Heart left ventricle (tissue), 16 donors: ENCODE measurements at regions of chr5 and their contacts with region 1.

Region 1: GRCh38 chr5:138542956-138543729 is at the start of gene ETF1:
- DNase-seq: peak; percentile 100
- ATAC-seq: peak; percentile 93 to 96 (median 96)
- H3K4me3 ChIP-seq: peak within 1 kb of the TSS; percentile 76 to 95 (median 84)
- H3K27ac ChIP-seq: peak within 1 kb of the TSS; percentile 90 to 100 (median 98)
- H3K4me1 ChIP-seq: peaks cover 17 to 80% (median 63%) of the 10 kb centered on the region in 12 donors
- H3K27me3 ChIP-seq: no peaks in the 10 kb centered on the region
- CTCF ChIP-seq: peak in 2 of 12 donors; percentile 17 to 18
- POLR2A ChIP-seq: peak; percentile 93 to 97
- total RNA-seq, gene ETF1: 52.4 to 116 (median 81.8) TPM

Region 2: GRCh38 chr5:138331449-138332368 is 211.4 kb before region 1 on chr5 and contains the start of gene CDC25C:
- intact Hi-C with region 1: loop called in 1 of 10 experiments (anchors 10 kb)
- DNase-seq: peak; percentile 97 to 99 (median 98)
- ATAC-seq: peak; percentile 100
- H3K4me3 ChIP-seq: peak within 1 kb of the TSS; percentile 2 to 63 (median 48)
- H3K27ac ChIP-seq: peak within 1 kb of the TSS in 1 of 12 donors; percentile 26
- H3K4me1 ChIP-seq: peaks cover 0 to 16% (median 10%) of the 10 kb centered on the region in 12 donors
- H3K27me3 ChIP-seq: no peaks in the 10 kb centered on the region
- CTCF ChIP-seq: peak in 1 of 12 donors; percentile 6
- POLR2A ChIP-seq: peak in 1 of 2 donors; percentile 17
- total RNA-seq, gene CDC25C: 0.19 to 2.5 (median 0.58) TPM in 4 of 9 donors, not detected in the others

Region 3: GRCh38 chr5:138449501-138450239 is 93.5 kb before region 1 on chr5:
- intact Hi-C with region 1: loop called in 1 of 10 experiments (anchors 5 kb)
- DNase-seq: peak; percentile 87 to 92 (median 89)
- ATAC-seq: peak; percentile 83 to 94 (median 92)
- H3K4me3 ChIP-seq: peak overlapping the region in 1 of 12 donors; percentile 16
- H3K27ac ChIP-seq: no peak overlapping the region
- H3K4me1 ChIP-seq: peaks cover 0 to 10% (median 7%) of the 10 kb centered on the region in 12 donors
- H3K27me3 ChIP-seq: no peaks in the 10 kb centered on the region
- CTCF ChIP-seq: peak; percentile 93 to 97 (median 96)
- POLR2A ChIP-seq: no peak

Region 4: DNA sequence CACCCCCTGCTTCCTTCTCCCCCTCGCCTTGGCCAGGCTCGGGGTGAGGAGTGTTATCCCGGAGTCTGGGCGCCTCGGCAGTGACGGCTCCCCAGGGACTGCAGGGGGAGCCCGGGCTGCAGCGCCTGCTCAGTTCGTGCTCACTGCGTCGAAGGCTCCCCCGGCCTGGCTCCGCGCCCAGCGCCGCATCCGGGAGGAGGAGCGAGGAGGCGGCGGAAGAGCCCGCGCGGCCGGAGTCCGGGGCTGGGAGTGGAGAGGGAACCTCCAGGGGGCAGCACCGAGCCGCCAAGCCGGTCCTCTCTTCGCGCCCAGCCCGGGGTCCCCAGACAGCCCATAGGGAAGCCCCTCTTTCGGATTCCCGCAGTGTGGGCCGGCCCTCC is 79.1 kb before region 1 on chr5:
- intact Hi-C with region 1: loop called in 5 of 10 experiments (anchors 2 to 5 kb)
- DNase-seq: peak; percentile 96 to 98 (median 97)
- ATAC-seq: peak; percentile 77 to 84 (median 80)
- H3K4me3 ChIP-seq: peak overlapping the region; percentile 62 to 95 (median 86)
- H3K27ac ChIP-seq: peak overlapping the region; percentile 93 to 100 (median 98)
- H3K4me1 ChIP-seq: peaks cover 0 to 68% (median 37%) of the 10 kb centered on the region in 12 donors
- H3K27me3 ChIP-seq: no peaks in the 10 kb centered on the region
- CTCF ChIP-seq: peak; percentile 85 to 99 (median 94)
- POLR2A ChIP-seq: peak in 1 of 2 donors; percentile 73

Region 5: DNA sequence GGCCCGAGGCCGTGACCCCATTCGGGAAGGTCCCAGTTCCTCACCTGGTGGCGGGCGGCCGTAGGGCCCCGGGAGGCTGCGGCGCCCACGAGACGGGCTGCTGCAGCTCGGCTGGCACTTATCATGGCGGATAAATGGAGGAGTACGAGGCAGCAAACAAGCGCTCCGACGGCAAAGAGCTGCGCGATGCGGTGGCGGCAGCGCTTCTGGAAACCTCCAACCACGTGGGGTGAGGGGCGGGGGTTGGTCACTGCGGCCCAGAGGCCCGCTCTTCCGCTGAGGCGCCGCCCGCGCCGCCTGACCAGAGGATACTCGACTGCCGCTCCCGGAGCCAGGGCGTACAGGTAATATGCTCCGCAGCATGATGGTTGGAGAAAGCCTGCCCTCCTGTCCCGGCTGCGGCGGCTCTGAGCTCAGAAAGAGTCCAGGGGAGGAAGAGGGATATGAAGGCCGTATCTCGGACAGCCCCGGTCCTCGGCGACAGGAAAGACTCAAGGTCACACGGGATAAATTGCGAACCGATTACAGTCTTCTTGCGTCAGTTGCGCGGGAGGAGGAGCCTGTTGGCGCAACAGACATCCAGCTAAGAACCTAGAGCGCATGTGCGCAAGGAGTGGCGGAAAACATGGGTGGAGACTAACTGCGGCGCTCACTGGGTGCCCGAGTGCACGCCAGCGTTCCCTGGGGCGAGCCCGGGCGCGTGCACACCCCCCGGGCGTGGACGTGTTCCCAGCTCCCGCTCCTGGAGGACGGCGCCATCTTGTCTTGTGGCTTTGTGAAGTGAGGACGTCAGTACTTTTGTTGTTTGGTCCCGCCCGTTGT is 32.3 kb after region 1 on chr5 and contains the start of gene HSPA9:
- intact Hi-C with region 1: loop called in 2 of 10 experiments (anchors 1 kb)
- DNase-seq: peak; percentile 98 to 99 (median 98)
- ATAC-seq: peak; percentile 95 to 98 (median 96)
- H3K4me3 ChIP-seq: peak within 1 kb of the TSS; percentile 68 to 98 (median 89)
- H3K27ac ChIP-seq: peak within 1 kb of the TSS; percentile 98 to 100 (median 99)
- H3K4me1 ChIP-seq: peaks cover 0 to 35% (median 11%) of the 10 kb centered on the region in 12 donors
- H3K27me3 ChIP-seq: no peaks in the 10 kb centered on the region
- CTCF ChIP-seq: no peak
- POLR2A ChIP-seq: peak; percentile 33 to 54
- total RNA-seq, gene HSPA9: 211 to 481 (median 313) TPM

Region 6: GRCh38 chr5:138737494-138738265 is 194.5 kb after region 1 on chr5:
- intact Hi-C with region 1: no loop called
- DNase-seq: no peak
- ATAC-seq: no peak
- H3K4me3 ChIP-seq: no peak overlapping the region
- H3K27ac ChIP-seq: no peak overlapping the region
- H3K4me1 ChIP-seq: peaks cover 0 to 14% (median 0%) of the 10 kb centered on the region in 12 donors
- H3K27me3 ChIP-seq: no peaks in the 10 kb centered on the region
- CTCF ChIP-seq: no peak
- POLR2A ChIP-seq: no peak